HCT116 (cell line): ENCODE measurements at regions of chr7 and their contacts with region 1.

Region 1: DNA sequence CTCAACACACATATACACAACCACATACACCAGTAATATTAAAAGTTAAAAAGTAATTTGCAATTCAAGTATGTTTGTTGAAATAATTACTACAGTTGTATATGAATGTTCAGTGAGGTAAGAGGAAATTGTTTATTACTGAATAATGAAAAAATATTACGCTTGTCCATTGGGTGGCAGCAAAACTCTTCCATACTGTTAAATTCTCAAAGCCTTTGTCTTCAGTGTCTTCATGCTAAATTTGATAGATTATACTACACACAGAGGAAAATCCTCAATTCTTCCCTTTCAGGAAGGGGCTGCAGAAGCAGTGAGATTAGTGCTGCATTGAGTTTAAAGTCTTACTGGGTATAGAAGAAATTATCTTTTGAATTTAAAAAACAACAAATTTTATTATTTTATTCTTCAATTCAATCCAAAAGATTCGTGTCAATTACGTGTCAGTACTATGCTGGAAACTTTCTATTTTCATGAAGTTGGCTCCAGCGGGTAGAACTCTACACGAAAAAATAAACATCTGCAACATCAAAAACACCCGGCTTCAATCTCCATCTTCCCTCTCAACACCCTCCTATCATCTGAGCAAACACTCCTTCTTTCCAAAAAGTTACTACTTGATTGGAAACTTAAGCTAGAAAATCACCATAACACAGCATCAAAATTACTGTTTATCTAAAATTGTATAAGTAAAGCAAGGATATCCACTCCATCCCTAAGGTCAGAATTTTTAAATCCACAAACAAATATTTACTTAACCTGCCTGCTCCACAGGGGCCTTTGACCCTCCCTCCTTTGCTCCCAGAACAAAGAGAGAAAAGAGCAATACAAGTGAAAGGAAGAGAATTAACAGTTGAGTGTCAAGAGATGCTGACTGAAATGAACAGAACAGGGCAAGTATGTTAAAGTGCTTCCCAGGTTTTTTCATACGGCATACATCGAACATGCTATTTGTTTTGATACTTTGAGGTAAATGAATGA is 37.0 kb upstream of the TES start:
- DNase-seq: peak; percentile 55
- ATAC-seq: peak; percentile 65
- H3K4me3 ChIP-seq: no peak overlapping the region
- H3K27ac ChIP-seq: no peak overlapping the region
- H3K4me1 ChIP-seq: peaks cover 3 to 5% of the 10 kb centered on the region in 2 experiments; a peak in 1 of 4 replicates
- H3K27me3 ChIP-seq: no peaks in the 10 kb centered on the region
- CTCF ChIP-seq: peak; percentile 28 to 73 (median 64); a peak in 5 of 6 replicates
- POLR2A ChIP-seq: no peak
- RAD21 ChIP-seq: peak; percentile 87

Region 2: DNA sequence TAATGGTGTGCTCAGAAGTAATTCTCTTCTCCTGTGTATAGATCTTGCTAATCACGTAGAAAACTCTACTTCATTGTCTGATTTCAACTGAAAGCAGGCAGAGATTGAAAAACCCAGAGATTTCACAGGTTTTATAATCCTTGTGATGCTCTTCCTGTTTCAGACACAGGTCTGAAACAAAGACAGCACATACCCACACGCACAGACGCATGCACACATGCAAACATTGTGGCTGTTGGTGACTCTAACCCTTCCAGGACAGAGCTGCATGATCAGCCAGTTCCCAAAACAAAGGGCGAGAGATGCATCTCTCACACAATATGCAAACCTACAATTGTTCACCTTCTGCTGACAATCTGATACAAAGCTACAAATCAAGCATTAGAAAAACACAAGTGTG is 131.7 kb before region 1 on chr7:
- CTCF ChIA-PET with region 1: no interaction called
- POLR2A ChIA-PET with region 1: no interaction called
- RAD21 ChIA-PET with region 1: no interaction called
- intact Hi-C with region 1: no loop called
- DNase-seq: no peak
- ATAC-seq: no peak
- H3K4me3 ChIP-seq: no peak overlapping the region
- H3K27ac ChIP-seq: no peak overlapping the region
- H3K4me1 ChIP-seq: no peaks in the 10 kb centered on the region
- H3K27me3 ChIP-seq: no peaks in the 10 kb centered on the region
- CTCF ChIP-seq: no peak
- POLR2A ChIP-seq: no peak
- RAD21 ChIP-seq: no peak

Region 3: GRCh38 chr7:116236020-116236630 is 62.8 kb after region 1 on chr7:
- CTCF ChIA-PET with region 1: interaction called, 71 read pairs
- POLR2A ChIA-PET with region 1: no interaction called
- RAD21 ChIA-PET with region 1: no interaction called
- intact Hi-C with region 1: no loop called
- DNase-seq: no peak
- ATAC-seq: peak; percentile 63
- H3K4me3 ChIP-seq: no peak overlapping the region
- H3K27ac ChIP-seq: no peak overlapping the region; the same call in 1 of the 2 replicates
- H3K4me1 ChIP-seq: peaks cover 7 to 15% of the 10 kb centered on the region in 2 experiments; a peak in 2 of 4 replicates
- H3K27me3 ChIP-seq: no peaks in the 10 kb centered on the region
- CTCF ChIP-seq: peak; percentile 35 to 60 (median 54); a peak in 4 of 6 replicates
- POLR2A ChIP-seq: no peak
- RAD21 ChIP-seq: peak; percentile 70

Region 4: DNA sequence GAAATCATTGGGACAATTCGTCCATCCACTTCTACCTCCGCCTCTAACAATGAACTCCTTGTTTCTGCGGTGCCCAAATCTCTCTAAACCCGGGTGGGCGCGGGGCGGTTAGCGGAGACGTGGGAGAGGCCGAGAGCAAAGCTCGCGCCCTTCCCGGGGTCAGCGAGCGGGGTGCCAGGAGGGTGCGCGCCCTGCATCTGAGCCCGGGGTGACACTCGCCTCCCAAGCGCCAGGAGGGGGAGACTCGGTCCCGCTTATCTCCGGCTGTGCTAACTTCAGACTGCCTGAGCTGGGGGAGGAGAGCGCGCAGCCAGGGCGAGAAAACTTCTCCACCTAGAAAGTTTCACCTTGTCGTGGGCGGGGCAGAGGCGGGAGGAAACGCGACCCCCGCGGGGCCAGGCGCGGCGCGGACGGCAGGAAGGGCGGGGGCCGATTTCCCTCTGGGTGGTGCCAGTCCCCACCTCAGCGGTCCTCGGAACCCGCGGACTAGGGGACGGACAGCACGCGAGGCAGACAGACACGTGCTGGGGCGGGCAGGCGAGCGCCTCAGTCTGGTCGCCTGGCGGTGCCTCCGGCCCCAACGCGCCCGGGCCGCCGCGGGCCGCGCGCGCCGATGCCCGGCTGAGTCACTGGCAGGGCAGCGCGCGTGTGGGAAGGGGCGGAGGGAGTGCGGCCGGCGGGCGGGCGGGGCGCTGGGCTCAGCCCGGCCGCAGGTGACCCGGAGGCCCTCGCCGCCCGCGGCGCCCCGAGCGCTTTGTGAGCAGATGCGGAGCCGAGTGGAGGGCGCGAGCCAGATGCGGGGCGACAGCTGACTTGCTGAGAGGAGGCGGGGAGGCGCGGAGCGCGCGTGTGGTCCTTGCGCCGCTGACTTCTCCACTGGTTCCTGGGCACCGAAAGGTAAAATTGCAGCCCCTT is 498.6 kb after region 1 on chr7 and contains the start of gene MET:
- CTCF ChIA-PET with region 1: no interaction called
- POLR2A ChIA-PET with region 1: no interaction called
- RAD21 ChIA-PET with region 1: no interaction called
- intact Hi-C with region 1: loop called (anchors 10 kb)
- DNase-seq: peak; percentile 84
- ATAC-seq: peak; percentile 84
- H3K4me3 ChIP-seq: peak within 1 kb of the TSS; percentile 86 to 90
- H3K27ac ChIP-seq: peak within 1 kb of the TSS; percentile 90
- H3K4me1 ChIP-seq: peaks cover 42 to 56% of the 10 kb centered on the region in 2 experiments
- H3K27me3 ChIP-seq: no peaks in the 10 kb centered on the region
- CTCF ChIP-seq: peak; percentile 49 to 84 (median 56)
- POLR2A ChIP-seq: peak; percentile 68
- RAD21 ChIP-seq: peak; percentile 93
- total RNA-seq, gene MET: 200 TPM

Region 5: DNA sequence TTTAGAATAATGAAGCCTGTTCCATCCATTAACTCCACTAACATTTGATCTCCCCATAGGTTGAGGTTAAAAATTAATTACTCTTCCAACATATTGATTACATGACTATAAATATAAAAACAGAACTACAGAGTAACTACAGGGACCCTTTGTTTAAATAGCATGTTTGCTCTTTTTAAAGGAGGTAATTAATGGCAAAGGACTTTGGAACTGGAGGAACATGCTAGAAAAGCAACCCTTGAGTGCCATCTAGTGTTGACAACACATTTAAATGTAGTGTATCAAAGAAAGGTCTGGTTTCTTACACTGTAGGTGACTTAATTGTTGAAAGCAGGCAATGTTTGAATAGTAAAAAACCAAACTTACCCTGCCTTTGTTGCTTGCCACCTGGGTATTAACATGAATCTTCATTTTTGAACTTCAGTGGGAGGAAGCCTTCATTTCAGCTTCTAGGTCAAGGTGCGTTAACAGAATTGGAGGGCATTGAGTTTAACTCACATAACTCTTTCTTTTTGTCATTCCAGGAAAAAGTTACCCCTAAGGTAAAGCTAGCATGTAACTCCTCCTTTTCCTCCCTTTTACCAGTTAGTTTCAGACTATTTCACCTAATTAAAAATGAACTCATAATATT is 636.4 kb after region 1 on chr7:
- CTCF ChIA-PET with region 1: no interaction called
- POLR2A ChIA-PET with region 1: no interaction called
- RAD21 ChIA-PET with region 1: no interaction called
- intact Hi-C with region 1: loop called (anchors 1 kb)
- DNase-seq: peak; percentile 67
- ATAC-seq: peak; percentile 81
- H3K4me3 ChIP-seq: no peak overlapping the region
- H3K27ac ChIP-seq: peak overlapping the region; percentile 64
- H3K4me1 ChIP-seq: peaks cover 43 to 48% of the 10 kb centered on the region in 2 experiments
- H3K27me3 ChIP-seq: no peaks in the 10 kb centered on the region
- CTCF ChIP-seq: peak; percentile 43 to 86 (median 76); a peak in 4 of 6 replicates
- POLR2A ChIP-seq: no peak
- RAD21 ChIP-seq: peak; percentile 94

Region 6: GRCh38 chr7:117127585-117128168 is 954.3 kb after region 1 on chr7:
- CTCF ChIA-PET with region 1: interaction called, 3 read pairs
- POLR2A ChIA-PET with region 1: no interaction called
- RAD21 ChIA-PET with region 1: no interaction called
- intact Hi-C with region 1: loop called (anchors 5 kb)
- DNase-seq: peak; percentile 28
- ATAC-seq: peak; percentile 55
- H3K4me3 ChIP-seq: no peak overlapping the region
- H3K27ac ChIP-seq: no peak overlapping the region
- H3K4me1 ChIP-seq: peaks cover 13 to 33% of the 10 kb centered on the region in 2 experiments
- H3K27me3 ChIP-seq: no peaks in the 10 kb centered on the region
- CTCF ChIP-seq: peak; percentile 61 to 82 (median 68); a peak in 5 of 6 replicates
- POLR2A ChIP-seq: no peak
- RAD21 ChIP-seq: peak; percentile 74

Region 7: GRCh38 chr7:117673839-117674238 is 1500.5 kb after region 1 on chr7:
- CTCF ChIA-PET with region 1: no interaction called
- POLR2A ChIA-PET with region 1: no interaction called
- RAD21 ChIA-PET with region 1: no interaction called
- intact Hi-C with region 1: loop called (anchors 5 kb)
- DNase-seq: peak; percentile 24
- ATAC-seq: peak; percentile 77
- H3K4me3 ChIP-seq: no peak overlapping the region
- H3K27ac ChIP-seq: no peak overlapping the region
- H3K4me1 ChIP-seq: no peaks in the 10 kb centered on the region
- H3K27me3 ChIP-seq: no peaks in the 10 kb centered on the region
- CTCF ChIP-seq: peak; percentile 31 to 54 (median 51); a peak in 4 of 6 replicates
- POLR2A ChIP-seq: no peak
- RAD21 ChIP-seq: peak; percentile 56